Caco-2 (cell line): ENCODE measurements at regions of chr1 and their contacts with region 1.

Region 1: GRCh38 chr1:41416552-41417334 is 55.5 kb downstream of the FOXO6 start:
- DNase-seq: peak; percentile 56 to 69
- H3K4me3 ChIP-seq: no peak overlapping the region
- H3K4me3 Mint-ChIP-seq: no peak overlapping the region
- H3K27ac Mint-ChIP-seq: no peak overlapping the region
- H3K4me1 ChIP-seq: no peaks in the 10 kb centered on the region; the same call in 1 of the 2 replicates
- H3K4me1 Mint-ChIP-seq: no peaks in the 10 kb centered on the region
- H3K27me3 ChIP-seq: no peaks in the 10 kb centered on the region
- H3K27me3 Mint-ChIP-seq: no peaks in the 10 kb centered on the region
- CTCF ChIP-seq: peak; percentile 72 to 74

Region 2: DNA sequence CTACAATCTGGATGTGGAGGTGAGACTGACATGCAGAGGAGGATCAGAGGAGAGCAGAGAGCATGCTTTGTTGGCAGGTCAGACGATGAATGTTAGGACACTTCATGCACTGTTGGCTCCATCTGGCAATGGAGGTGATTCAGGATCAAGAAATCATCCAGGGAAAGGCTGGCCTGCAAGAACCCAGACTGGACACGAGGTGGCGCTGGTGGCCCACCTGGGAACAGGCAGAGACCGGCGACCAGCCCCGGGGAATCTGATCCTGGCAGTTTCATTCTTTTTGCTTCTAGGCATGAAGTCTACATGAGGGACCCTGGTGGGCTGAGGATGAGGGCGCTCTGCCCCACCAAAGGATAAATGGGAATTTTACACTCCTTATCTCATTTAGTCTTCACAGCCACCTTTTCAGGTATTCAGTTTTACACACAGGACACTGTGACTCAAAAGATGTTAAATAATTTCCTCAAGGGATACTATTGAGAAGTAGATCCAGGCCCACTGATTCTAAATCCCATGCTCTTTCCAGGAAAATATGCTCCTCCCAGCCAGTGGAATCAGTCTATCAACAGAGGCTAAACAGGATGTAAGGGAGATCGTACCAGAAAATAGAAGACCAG is 148.5 kb before region 1 on chr1:
- CTCF ChIA-PET with region 1: no interaction called
- POLR2A ChIA-PET with region 1: no interaction called
- intact Hi-C with region 1: loop called (anchors 1 kb)
- DNase-seq: peak; percentile 56 to 77
- H3K4me3 ChIP-seq: no peak overlapping the region
- H3K4me3 Mint-ChIP-seq: no peak overlapping the region
- H3K27ac Mint-ChIP-seq: no peak overlapping the region
- H3K4me1 ChIP-seq: no peaks in the 10 kb centered on the region
- H3K4me1 Mint-ChIP-seq: no peaks in the 10 kb centered on the region
- H3K27me3 ChIP-seq: no peaks in the 10 kb centered on the region
- H3K27me3 Mint-ChIP-seq: no peaks in the 10 kb centered on the region
- CTCF ChIP-seq: peak; percentile 85 to 86

Region 3: GRCh38 chr1:41282679-41283317 is 133.9 kb before region 1 on chr1:
- CTCF ChIA-PET with region 1: interaction called, 3 read pairs
- POLR2A ChIA-PET with region 1: no interaction called
- intact Hi-C with region 1: loop called (anchors 5 kb)
- DNase-seq: peak; percentile 41 to 53
- H3K4me3 ChIP-seq: no peak overlapping the region
- H3K4me3 Mint-ChIP-seq: no peak overlapping the region
- H3K27ac Mint-ChIP-seq: no peak overlapping the region
- H3K4me1 ChIP-seq: no peaks in the 10 kb centered on the region
- H3K4me1 Mint-ChIP-seq: no peaks in the 10 kb centered on the region
- H3K27me3 ChIP-seq: no peaks in the 10 kb centered on the region
- H3K27me3 Mint-ChIP-seq: peaks cover 15% of the 10 kb centered on the region
- CTCF ChIP-seq: peak; percentile 76 to 78

Region 4: DNA sequence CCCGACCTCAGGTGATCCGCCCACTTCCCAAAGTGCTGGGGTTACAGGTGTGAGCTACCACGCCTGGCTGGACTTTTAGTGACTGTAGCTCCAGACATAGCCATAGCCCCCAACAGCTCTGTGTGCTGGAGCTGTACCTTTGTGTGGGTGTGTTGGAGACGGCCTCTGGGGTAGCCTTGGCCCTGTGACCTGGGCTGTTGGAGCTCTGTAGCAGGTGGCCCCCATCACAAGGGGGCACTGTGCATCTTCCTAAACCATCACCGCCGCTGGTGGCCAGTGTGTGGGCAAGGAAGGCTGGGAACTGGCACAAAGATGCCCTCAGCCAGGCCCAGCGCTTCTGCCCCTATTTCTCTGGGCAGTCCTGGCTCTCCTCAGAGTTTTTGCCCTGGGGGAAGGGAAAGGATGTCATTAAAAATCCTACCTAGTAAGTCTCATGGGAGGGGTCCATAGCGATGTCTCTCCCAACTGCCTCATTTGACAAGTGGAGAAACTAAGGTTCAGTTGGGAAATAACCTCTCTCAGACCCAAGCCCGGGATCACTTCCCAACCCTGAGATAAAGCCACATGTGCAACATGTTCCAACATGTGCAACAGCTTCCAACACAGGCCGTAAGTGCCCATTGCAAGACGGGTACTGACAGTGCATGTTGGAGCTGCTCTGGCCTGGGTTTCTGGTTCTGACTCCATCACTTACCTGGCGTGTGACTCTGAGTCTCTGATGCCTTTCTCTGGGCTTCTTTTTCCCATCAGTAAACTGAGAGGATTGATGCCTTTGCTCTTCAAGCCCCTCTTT is 93.7 kb before region 1 on chr1:
- CTCF ChIA-PET with region 1: interaction called, 4 read pairs
- POLR2A ChIA-PET with region 1: no interaction called
- intact Hi-C with region 1: loop called (anchors 1 kb)
- DNase-seq: peak in 1 of 2 experiments; percentile 40
- H3K4me3 ChIP-seq: no peak overlapping the region
- H3K4me3 Mint-ChIP-seq: no peak overlapping the region
- H3K27ac Mint-ChIP-seq: no peak overlapping the region
- H3K4me1 ChIP-seq: no peaks in the 10 kb centered on the region
- H3K4me1 Mint-ChIP-seq: peaks cover 8% of the 10 kb centered on the region
- H3K27me3 ChIP-seq: no peaks in the 10 kb centered on the region
- H3K27me3 Mint-ChIP-seq: no peaks in the 10 kb centered on the region
- CTCF ChIP-seq: peak; percentile 27 to 48

Region 5: GRCh38 chr1:41360993-41361753 is 55.6 kb before region 1 on chr1 and contains the start of gene FOXO6:
- CTCF ChIA-PET with region 1: interaction called, 5 read pairs
- POLR2A ChIA-PET with region 1: no interaction called
- intact Hi-C with region 1: loop called (anchors 5 kb)
- DNase-seq: peak; percentile 95 to 96
- H3K4me3 ChIP-seq: peak within 1 kb of the TSS; percentile 46
- H3K4me3 Mint-ChIP-seq: peak within 1 kb of the TSS; percentile 53
- H3K27ac Mint-ChIP-seq: peak within 1 kb of the TSS; percentile 69
- H3K4me1 ChIP-seq: peaks cover 6% of the 10 kb centered on the region
- H3K4me1 Mint-ChIP-seq: peaks cover 13% of the 10 kb centered on the region
- H3K27me3 ChIP-seq: no peaks in the 10 kb centered on the region; the same call in 1 of the 2 replicates
- H3K27me3 Mint-ChIP-seq: peaks cover 3% of the 10 kb centered on the region
- CTCF ChIP-seq: peak; percentile 24 to 35
- total RNA-seq, gene FOXO6: 0.42 and 0.59 TPM in 2 replicates

Region 6: GRCh38 chr1:41622859-41623723 is 206.3 kb after region 1 on chr1:
- CTCF ChIA-PET with region 1: no interaction called
- POLR2A ChIA-PET with region 1: no interaction called
- intact Hi-C with region 1: no loop called
- DNase-seq: no peak
- H3K4me3 ChIP-seq: no peak overlapping the region
- H3K4me3 Mint-ChIP-seq: peak overlapping the region; percentile 53
- H3K27ac Mint-ChIP-seq: peak overlapping the region; percentile 80
- H3K4me1 ChIP-seq: peaks cover 18% of the 10 kb centered on the region
- H3K4me1 Mint-ChIP-seq: peaks cover 18% of the 10 kb centered on the region
- H3K27me3 ChIP-seq: no peaks in the 10 kb centered on the region
- H3K27me3 Mint-ChIP-seq: no peaks in the 10 kb centered on the region
- CTCF ChIP-seq: no peak

Region 7: GRCh38 chr1:42157667-42158066 is 740.9 kb after region 1 on chr1:
- CTCF ChIA-PET with region 1: no interaction called
- POLR2A ChIA-PET with region 1: no interaction called
- intact Hi-C with region 1: no loop called
- DNase-seq: no peak
- H3K4me3 ChIP-seq: no peak overlapping the region
- H3K4me3 Mint-ChIP-seq: no peak overlapping the region
- H3K27ac Mint-ChIP-seq: no peak overlapping the region
- H3K4me1 ChIP-seq: peaks cover 7% of the 10 kb centered on the region; the same call in 1 of the 2 replicates
- H3K4me1 Mint-ChIP-seq: peaks cover 7% of the 10 kb centered on the region
- H3K27me3 ChIP-seq: no peaks in the 10 kb centered on the region
- H3K27me3 Mint-ChIP-seq: no peaks in the 10 kb centered on the region
- CTCF ChIP-seq: no peak